ENCODE measurements at regions of chr9 and their contacts with region 1.

Region 1: GRCh38 chr9:9893822-9894221 is 719.0 kb downstream of the PTPRD start:
- DNase-seq: no peak
- H3K4me3 ChIP-seq: no peak overlapping the region
- H3K27ac ChIP-seq: no peak overlapping the region
- H3K4me1 ChIP-seq: no peaks in the 10 kb centered on the region
- CTCF ChIP-seq: no peak

Region 2: DNA sequence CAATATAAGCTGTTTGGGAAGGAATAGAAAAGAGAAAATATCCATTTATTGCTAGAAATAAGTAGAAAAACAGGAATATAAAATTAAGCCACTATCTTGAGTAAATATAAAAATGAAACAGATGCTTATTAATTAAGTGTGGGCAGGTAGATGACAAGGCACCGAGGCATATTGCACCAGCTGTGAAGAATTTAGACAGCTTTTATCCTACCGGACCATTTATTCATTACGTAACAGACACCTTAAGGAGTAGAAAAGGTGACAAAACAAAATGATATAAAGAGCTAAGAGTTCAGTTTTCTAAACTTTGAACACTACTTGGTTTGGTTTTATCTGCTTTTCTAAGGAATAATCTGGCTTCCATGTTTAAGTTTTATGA is 314.9 kb after region 1 on chr9:
- CTCF ChIA-PET with region 1: no interaction called
- POLR2A ChIA-PET with region 1: no interaction called
- intact Hi-C with region 1: loop called (anchors 5 kb)
- DNase-seq: peak; percentile 2
- H3K4me3 ChIP-seq: peak overlapping the region; percentile 66
- H3K27ac ChIP-seq: peak overlapping the region; percentile 57
- H3K4me1 ChIP-seq: peaks cover 12% of the 10 kb centered on the region
- CTCF ChIP-seq: no peak

Region 3: GRCh38 chr9:11241779-11242178 is 1348.0 kb after region 1 on chr9:
- CTCF ChIA-PET with region 1: no interaction called
- POLR2A ChIA-PET with region 1: no interaction called
- intact Hi-C with region 1: no loop called
- DNase-seq: no peak
- H3K4me3 ChIP-seq: no peak overlapping the region
- H3K27ac ChIP-seq: no peak overlapping the region
- H3K4me1 ChIP-seq: no peaks in the 10 kb centered on the region
- CTCF ChIP-seq: no peak